PC-9 (cell line): ENCODE measurements at regions of chr14 and their contacts with region 1.

Region 1: GRCh38 chr14:74881431-74882361 is at the start of gene DLST:
- DNase-seq: peak; percentile 78 to 99
- H3K4me3 ChIP-seq: peak within 1 kb of the TSS; percentile 75
- H3K27ac ChIP-seq: peak within 1 kb of the TSS; percentile 17
- H3K4me1 ChIP-seq: peaks cover 49% of the 10 kb centered on the region
- H3K27me3 ChIP-seq: no peaks in the 10 kb centered on the region
- CTCF ChIP-seq: no peak
- total RNA-seq, gene DLST: 309 and 320 TPM in 2 replicates

Region 2: DNA sequence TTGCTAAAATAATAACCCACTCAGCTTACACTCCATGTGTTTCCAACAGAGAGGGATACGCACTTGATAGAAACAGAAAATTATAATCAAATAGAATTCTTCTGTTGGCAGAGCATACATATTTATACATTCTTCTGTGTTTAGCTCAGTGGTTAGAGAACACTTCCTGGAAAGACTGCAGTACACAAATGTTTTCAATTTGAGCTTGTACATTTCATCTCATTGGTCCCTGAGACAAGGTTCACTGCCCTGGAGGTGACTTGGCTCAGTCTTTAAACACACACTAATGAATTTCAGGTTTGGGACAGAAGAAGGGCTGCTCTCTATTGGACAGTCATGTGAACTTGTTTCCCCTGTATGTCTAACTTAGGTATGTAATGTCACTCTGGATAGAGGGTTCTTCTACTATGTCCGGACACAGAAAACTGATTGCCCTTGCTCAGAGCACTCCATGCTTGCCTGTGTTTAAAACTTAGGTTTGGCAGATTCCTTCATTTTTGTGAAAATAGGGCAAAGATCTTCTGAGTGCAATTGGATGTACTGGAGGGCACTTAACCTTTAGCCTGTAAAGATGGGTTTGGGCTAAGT is 28.7 kb before region 1 on chr14:
- CTCF ChIA-PET with region 1: interaction called, 10 read pairs
- POLR2A ChIA-PET with region 1: no interaction called
- intact Hi-C with region 1: no loop called
- DNase-seq: peak in 1 of 2 experiments; percentile 55
- H3K4me3 ChIP-seq: no peak overlapping the region
- H3K27ac ChIP-seq: no peak overlapping the region
- H3K4me1 ChIP-seq: peaks cover 20% of the 10 kb centered on the region
- H3K27me3 ChIP-seq: no peaks in the 10 kb centered on the region
- CTCF ChIP-seq: no peak

Region 3: GRCh38 chr14:74893614-74894091 is 12.0 kb after region 1 on chr14:
- CTCF ChIA-PET with region 1: interaction called, 12 read pairs
- POLR2A ChIA-PET with region 1: interaction called, 12 read pairs
- intact Hi-C with region 1: no loop called
- DNase-seq: no peak
- H3K4me3 ChIP-seq: no peak overlapping the region
- H3K27ac ChIP-seq: no peak overlapping the region
- H3K4me1 ChIP-seq: peaks cover 11% of the 10 kb centered on the region
- H3K27me3 ChIP-seq: no peaks in the 10 kb centered on the region
- CTCF ChIP-seq: no peak

Region 4: DNA sequence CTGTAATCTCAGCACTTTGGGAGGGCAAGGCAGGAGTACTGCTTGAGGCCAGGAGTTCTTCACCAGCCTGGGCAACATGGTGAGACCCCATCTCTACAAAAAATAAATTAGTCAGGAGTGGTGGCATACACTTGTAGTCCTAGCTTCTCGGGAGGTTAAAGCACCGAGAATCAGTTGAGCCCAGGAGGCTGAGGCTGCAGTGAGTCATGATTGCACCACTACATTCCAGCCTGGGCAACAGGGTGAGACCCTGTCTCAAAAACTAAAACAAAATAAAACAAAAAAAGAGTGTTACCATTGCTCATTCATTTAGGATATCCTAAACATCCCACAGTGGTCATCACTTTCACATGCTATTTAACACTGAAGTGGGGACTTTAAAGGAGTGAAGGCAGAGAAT is 237.4 kb after region 1 on chr14:
- CTCF ChIA-PET with region 1: interaction called, 12 read pairs
- POLR2A ChIA-PET with region 1: no interaction called
- intact Hi-C with region 1: no loop called
- DNase-seq: no peak
- H3K4me3 ChIP-seq: no peak overlapping the region
- H3K27ac ChIP-seq: no peak overlapping the region
- H3K4me1 ChIP-seq: peaks cover 23% of the 10 kb centered on the region
- H3K27me3 ChIP-seq: no peaks in the 10 kb centered on the region
- CTCF ChIP-seq: no peak

Region 5: DNA sequence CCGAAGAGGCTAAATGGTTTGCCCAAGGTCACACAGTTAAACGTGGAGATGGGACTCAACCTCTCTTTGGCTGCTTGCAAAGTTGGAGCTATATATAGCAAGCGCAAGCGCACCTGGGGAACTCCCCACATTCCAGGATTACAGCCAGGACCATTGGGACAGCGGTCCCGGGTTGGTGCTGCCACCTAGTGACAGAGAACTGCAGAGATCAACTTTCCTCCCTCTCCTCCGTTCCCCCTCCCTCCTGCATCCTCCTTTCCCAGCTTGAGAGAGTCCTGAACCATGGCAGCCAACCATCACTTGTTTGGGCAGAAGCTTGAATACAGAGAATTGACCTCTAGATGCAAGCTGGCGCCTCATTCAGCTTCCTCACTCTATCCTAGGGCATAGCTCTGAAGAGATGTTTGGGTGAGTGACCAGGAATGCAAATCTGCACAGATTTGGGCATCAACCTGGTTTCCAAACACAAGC is 679.3 kb after region 1 on chr14:
- CTCF ChIA-PET with region 1: no interaction called
- POLR2A ChIA-PET with region 1: no interaction called
- intact Hi-C with region 1: loop called (anchors 10 kb)
- DNase-seq: peak; percentile 90 to 98
- H3K4me3 ChIP-seq: no peak overlapping the region
- H3K27ac ChIP-seq: peak overlapping the region; percentile 89
- H3K4me1 ChIP-seq: peaks cover 57% of the 10 kb centered on the region
- H3K27me3 ChIP-seq: no peaks in the 10 kb centered on the region
- CTCF ChIP-seq: peak; percentile 99